SK-N-SH (cell line): ENCODE measurements at regions of chr17 and their contacts with region 1.

Region 1: GRCh38 chr17:49997791-49998703 is 3.0 kb upstream of the DLX3 start:
- DNase-seq: peak; percentile 92
- H3K4me3 ChIP-seq: peak overlapping the region in 1 of 2 experiments; percentile 3; a peak in 2 of 4 replicates
- H3K27ac ChIP-seq: no peak overlapping the region
- H3K4me1 ChIP-seq: peaks cover 6 to 12% of the 10 kb centered on the region in 2 experiments; a peak in 1 of 4 replicates
- H3K27me3 ChIP-seq: peaks cover 76% of the 10 kb centered on the region
- CTCF ChIP-seq: peak; percentile 99
- EP300 ChIP-seq: no peak
- RAD21 ChIP-seq: peak; percentile 99

Region 2: DNA sequence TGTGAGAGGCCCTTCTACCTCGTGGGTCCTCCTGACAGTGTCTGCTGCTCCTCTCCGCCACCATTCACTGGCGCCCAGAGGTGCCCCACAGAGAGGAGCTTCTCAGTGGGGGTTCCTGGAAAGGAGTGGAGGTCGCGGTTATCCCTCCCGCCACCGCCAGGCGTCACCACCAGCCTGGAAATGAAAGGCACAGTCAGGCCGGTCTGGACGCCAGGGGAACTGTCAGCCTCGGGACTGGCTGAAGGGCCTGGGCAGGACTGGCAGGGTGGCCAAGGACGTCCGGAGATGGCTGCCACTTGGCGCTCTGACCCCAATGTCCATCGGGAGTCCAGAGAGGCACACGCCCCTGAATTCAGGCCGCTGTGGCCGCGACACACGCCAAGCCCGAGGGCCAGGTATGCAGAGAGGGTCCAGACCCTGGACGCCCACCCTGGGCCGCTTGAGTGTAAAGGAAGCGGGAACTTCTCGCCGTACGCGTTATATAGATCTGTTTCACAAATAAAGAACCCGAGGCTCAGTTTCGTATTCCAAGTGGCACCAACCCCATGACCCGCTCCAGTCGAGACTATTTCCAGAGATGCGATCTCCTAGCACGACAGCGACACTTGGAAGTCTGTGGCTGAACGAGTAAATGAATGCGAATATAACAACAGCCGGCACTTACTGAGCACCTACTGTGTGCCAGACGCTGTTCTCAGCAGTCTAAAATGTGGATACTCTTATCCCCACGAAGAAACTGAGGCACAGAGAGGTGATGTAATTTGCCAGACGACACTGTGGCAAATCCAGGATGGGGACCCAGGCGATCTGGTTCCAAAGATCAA is 430.0 kb before region 1 on chr17:
- CTCF ChIA-PET with region 1: interaction called, 42 read pairs
- POLR2A ChIA-PET with region 1: no interaction called
- DNase-seq: peak; percentile 92
- H3K4me3 ChIP-seq: peak overlapping the region; percentile 40 to 56
- H3K27ac ChIP-seq: no peak overlapping the region
- H3K4me1 ChIP-seq: peaks cover 0 to 14% of the 10 kb centered on the region in 2 experiments; a peak in 1 of 4 replicates
- H3K27me3 ChIP-seq: peaks cover 61% of the 10 kb centered on the region
- CTCF ChIP-seq: peak; percentile 99
- EP300 ChIP-seq: no peak
- RAD21 ChIP-seq: peak; percentile 99

Region 3: GRCh38 chr17:49798182-49798581 is 199.9 kb before region 1 on chr17:
- CTCF ChIA-PET with region 1: interaction called, 11 read pairs
- POLR2A ChIA-PET with region 1: no interaction called
- DNase-seq: no peak
- H3K4me3 ChIP-seq: no peak overlapping the region
- H3K27ac ChIP-seq: peak overlapping the region in 1 of 2 experiments; percentile 0; a peak in 1 of 4 replicates
- H3K4me1 ChIP-seq: no peaks in the 10 kb centered on the region
- H3K27me3 ChIP-seq: no peaks in the 10 kb centered on the region
- CTCF ChIP-seq: no peak
- EP300 ChIP-seq: no peak
- RAD21 ChIP-seq: no peak

Region 4: GRCh38 chr17:49887086-49888028 is 110.7 kb before region 1 on chr17:
- CTCF ChIA-PET with region 1: interaction called, 170 read pairs
- POLR2A ChIA-PET with region 1: interaction called, 3 read pairs
- DNase-seq: no peak
- H3K4me3 ChIP-seq: no peak overlapping the region
- H3K27ac ChIP-seq: no peak overlapping the region
- H3K4me1 ChIP-seq: peaks cover 0 to 6% of the 10 kb centered on the region in 2 experiments; a peak in 1 of 4 replicates
- H3K27me3 ChIP-seq: peaks cover 83% of the 10 kb centered on the region
- CTCF ChIP-seq: no peak
- EP300 ChIP-seq: no peak
- RAD21 ChIP-seq: no peak

Region 5: DNA sequence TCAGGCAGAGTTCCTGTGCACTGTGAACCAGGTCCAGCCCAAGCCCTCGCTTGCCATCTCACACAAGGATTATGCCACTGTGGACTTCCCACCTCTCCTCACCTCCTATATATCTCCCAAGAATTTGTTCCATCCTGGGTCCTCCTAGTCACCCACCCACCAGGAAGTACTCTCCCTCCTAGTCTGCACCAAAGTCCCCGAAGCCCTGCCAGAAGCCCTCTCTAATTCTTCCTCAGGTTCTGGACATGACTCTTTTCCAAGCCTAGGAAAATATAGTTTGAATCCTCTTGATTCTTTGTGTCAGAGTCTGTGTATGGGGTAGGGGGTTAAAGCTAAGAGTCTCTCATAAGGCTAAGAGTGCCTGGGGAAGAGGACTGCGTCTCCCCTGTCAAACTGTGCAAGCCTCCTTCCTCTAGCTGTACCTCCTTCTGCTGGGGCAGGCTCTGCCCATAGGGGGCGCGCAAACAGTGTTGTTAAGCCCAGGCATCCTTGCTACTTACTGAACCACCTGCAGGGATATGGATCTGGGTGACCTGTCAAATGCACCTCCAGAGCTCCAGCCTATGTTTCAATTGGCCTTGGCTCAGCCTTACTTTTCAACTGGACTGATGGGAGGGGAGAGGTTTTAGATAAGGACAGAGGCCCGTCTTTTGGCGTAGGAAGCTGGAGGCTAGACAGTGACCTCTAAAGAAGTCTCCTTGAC is 45.7 kb before region 1 on chr17:
- CTCF ChIA-PET with region 1: interaction called, 1,225 read pairs
- POLR2A ChIA-PET with region 1: no interaction called
- DNase-seq: peak; percentile 87
- H3K4me3 ChIP-seq: peak overlapping the region in 1 of 2 experiments; percentile 1; a peak in 1 of 4 replicates
- H3K27ac ChIP-seq: no peak overlapping the region
- H3K4me1 ChIP-seq: no peaks in the 10 kb centered on the region
- H3K27me3 ChIP-seq: peaks cover 81% of the 10 kb centered on the region
- CTCF ChIP-seq: peak; percentile 99
- EP300 ChIP-seq: no peak
- RAD21 ChIP-seq: peak; percentile 74

Region 6: GRCh38 chr17:50055426-50056230 is 57.6 kb after region 1 on chr17 and contains the start of gene ITGA3:
- CTCF ChIA-PET with region 1: interaction called, 61 read pairs
- POLR2A ChIA-PET with region 1: no interaction called
- DNase-seq: peak; percentile 93
- H3K4me3 ChIP-seq: peak within 1 kb of the TSS; percentile 90 to 91
- H3K27ac ChIP-seq: peak within 1 kb of the TSS; percentile 90 to 100
- H3K4me1 ChIP-seq: peaks cover 64 to 65% of the 10 kb centered on the region in 2 experiments
- H3K27me3 ChIP-seq: no peaks in the 10 kb centered on the region
- CTCF ChIP-seq: no peak; the same call in 1 of the 2 replicates
- EP300 ChIP-seq: peak in 1 of 2 experiments; percentile 66; a peak in 1 of 4 replicates
- RAD21 ChIP-seq: peak; percentile 2; the same call in 1 of the 2 replicates
- polyA plus RNA-seq, gene ITGA3: 543 and 766 TPM in 2 replicates

Region 7: GRCh38 chr17:50101346-50102163 is 103.5 kb after region 1 on chr17:
- CTCF ChIA-PET with region 1: interaction called, 66 read pairs
- POLR2A ChIA-PET with region 1: no interaction called
- DNase-seq: peak; percentile 89
- H3K4me3 ChIP-seq: no peak overlapping the region
- H3K27ac ChIP-seq: peak overlapping the region in 1 of 2 experiments; percentile 58; a peak in 2 of 4 replicates
- H3K4me1 ChIP-seq: peaks cover 0 to 28% of the 10 kb centered on the region in 2 experiments; a peak in 1 of 4 replicates
- H3K27me3 ChIP-seq: no peaks in the 10 kb centered on the region
- CTCF ChIP-seq: no peak
- EP300 ChIP-seq: 0 out of 4 replicates have a peak, but pooled peaks of 1 of the 2 experiments have one; percentile 4
- RAD21 ChIP-seq: no peak

Region 8: GRCh38 chr17:50129728-50130558 is 131.9 kb after region 1 on chr17 and contains the start of gene SAMD14:
- CTCF ChIA-PET with region 1: no interaction called
- POLR2A ChIA-PET with region 1: no interaction called
- DNase-seq: peak; percentile 96
- H3K4me3 ChIP-seq: peak within 1 kb of the TSS; percentile 61 to 70
- H3K27ac ChIP-seq: peak within 1 kb of the TSS in 1 of 2 experiments; percentile 69; a peak in 1 of 4 replicates
- H3K4me1 ChIP-seq: peaks cover 20 to 23% of the 10 kb centered on the region in 2 experiments; a peak in 3 of 4 replicates
- H3K27me3 ChIP-seq: no peaks in the 10 kb centered on the region
- CTCF ChIP-seq: no peak
- EP300 ChIP-seq: no peak
- RAD21 ChIP-seq: no peak
- polyA plus RNA-seq, gene SAMD14: 2.8 and 3.4 TPM in 2 replicates

Region 9: GRCh38 chr17:50560185-50560824 is 562.3 kb after region 1 on chr17 and contains the start of gene CACNA1G:
- CTCF ChIA-PET with region 1: no interaction called
- POLR2A ChIA-PET with region 1: no interaction called
- DNase-seq: peak; percentile 99
- H3K4me3 ChIP-seq: peak within 1 kb of the TSS; percentile 49 to 74
- H3K27ac ChIP-seq: no peak within 1 kb of the TSS; a peak in 1 of 4 replicates
- H3K4me1 ChIP-seq: peaks cover 14 to 83% of the 10 kb centered on the region in 2 experiments
- H3K27me3 ChIP-seq: peaks cover 31% of the 10 kb centered on the region
- CTCF ChIP-seq: no peak
- EP300 ChIP-seq: no peak
- RAD21 ChIP-seq: peak; percentile 35
- polyA plus RNA-seq, gene CACNA1G: 0.15 and 0.21 TPM in 2 replicates